ENCODE measurements at regions of chr4 and their contacts with region 1.

Region 1: GRCh38 chr4:84966383-84967242 is at the start of gene WDFY3:
- DNase-seq: peak; percentile 89 to 94
- ATAC-seq: peak; percentile 95
- H3K4me3 ChIP-seq: peak within 1 kb of the TSS; percentile 78 to 93
- H3K27ac ChIP-seq: peak within 1 kb of the TSS; percentile 80 to 87
- H3K4me1 ChIP-seq: peaks cover 2 to 3% of the 10 kb centered on the region in 2 donors
- H3K27me3 ChIP-seq: no peaks in the 10 kb centered on the region
- total RNA-seq, gene WDFY3: 127 to 177 TPM

Region 2: DNA sequence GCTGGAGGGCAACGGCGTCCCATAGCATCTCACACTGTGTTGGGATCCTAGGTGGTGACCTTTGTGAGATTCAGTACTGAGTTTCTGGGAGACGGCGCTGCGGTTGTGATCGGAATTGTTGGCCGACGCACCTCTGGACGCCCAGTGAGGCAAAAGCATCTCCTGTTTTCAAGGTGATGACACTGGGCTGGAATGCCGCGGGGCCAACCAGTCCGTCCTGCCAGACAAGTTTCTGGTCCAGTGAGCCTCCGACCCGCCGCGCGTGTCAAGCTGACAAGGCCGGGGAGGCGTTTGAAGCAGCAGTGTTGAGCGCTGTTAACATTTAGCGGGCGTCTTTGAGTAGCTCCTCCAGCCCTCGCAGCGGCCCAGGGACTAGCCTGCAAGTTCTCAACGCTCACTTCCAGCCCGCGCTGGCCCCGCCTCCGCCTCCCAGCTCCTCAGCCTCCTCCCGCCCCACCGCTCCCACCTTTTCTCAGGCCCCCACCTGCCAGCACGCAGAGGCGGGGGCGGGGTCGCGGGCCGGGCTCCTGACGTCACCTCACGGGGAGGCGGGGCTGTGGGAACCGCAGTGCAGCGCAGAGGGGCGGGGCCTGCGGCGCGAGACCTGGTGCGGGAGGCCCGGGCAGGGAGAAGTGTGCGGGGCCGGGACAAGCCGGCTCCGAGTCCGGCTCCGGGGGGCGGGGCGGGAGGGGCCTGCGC is 384.2 kb before region 1 on chr4:
- intact Hi-C with region 1: loop called in 1 of 2 experiments (anchors 5 kb)
- DNase-seq: peak; percentile 85 to 93
- ATAC-seq: peak; percentile 85
- H3K4me3 ChIP-seq: peak overlapping the region; percentile 62 to 71
- H3K27ac ChIP-seq: no peak overlapping the region
- H3K4me1 ChIP-seq: no peaks in the 10 kb centered on the region
- H3K27me3 ChIP-seq: no peaks in the 10 kb centered on the region

Region 3: DNA sequence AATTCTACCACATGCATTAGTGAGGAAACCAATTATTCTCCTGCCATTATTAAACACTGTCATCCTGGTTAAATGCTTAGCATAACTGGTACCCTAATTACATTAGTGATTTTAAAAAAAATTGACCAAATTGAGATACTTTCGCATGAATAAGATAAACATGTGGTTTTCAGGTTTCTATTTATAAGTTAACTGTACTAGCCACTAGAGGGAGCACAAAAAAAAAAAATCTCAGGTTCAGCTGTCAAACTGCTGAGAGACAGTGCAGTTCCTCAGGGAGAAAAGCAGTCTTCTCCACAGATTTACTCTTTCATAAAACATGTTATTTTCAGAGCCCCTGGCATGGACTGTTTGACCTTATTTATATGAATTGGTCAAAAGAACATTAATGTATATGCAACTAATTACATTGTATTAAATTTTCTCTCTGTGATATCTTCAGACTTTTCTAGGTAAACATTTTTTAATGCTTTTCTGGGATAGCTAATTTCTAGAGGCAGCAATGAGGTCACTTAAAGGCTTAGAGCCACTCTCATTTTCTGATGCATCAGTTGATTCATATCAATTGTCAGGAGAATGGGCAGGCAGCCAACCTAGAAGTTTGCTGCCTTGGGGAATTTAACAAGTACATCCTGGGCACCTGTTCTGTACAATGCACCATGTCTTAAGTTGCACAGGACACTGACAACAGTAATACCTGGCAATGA is 216.2 kb before region 1 on chr4:
- intact Hi-C with region 1: loop called in 1 of 2 experiments (anchors 2 kb)
- DNase-seq: no peak
- ATAC-seq: no peak
- H3K4me3 ChIP-seq: no peak overlapping the region
- H3K27ac ChIP-seq: no peak overlapping the region
- H3K4me1 ChIP-seq: no peaks in the 10 kb centered on the region
- H3K27me3 ChIP-seq: no peaks in the 10 kb centered on the region

Region 4: DNA sequence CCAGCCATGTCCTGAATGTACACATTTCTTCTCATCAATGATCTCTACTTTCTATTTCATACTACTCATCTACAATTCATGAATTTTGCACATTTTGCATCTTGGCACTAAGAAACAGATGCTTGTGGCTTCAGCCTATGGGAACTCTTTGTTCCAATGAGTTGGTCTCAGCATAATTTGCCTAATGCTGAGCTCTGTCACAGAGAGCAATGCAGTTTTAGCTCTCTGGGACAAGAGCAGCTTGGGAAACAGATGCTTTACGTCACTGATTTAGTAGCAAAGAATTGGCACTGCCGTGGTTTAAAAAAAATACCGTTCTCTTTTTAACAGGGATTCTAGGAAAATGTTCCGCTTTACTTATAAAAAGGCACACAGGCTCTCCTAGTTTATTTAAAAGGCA is 162.5 kb before region 1 on chr4:
- intact Hi-C with region 1: loop called in 1 of 2 experiments (anchors 10 kb)
- DNase-seq: no peak
- ATAC-seq: no peak
- H3K4me3 ChIP-seq: no peak overlapping the region
- H3K27ac ChIP-seq: no peak overlapping the region
- H3K4me1 ChIP-seq: peaks cover 3% of the 10 kb centered on the region in 2 donors
- H3K27me3 ChIP-seq: no peaks in the 10 kb centered on the region

Region 5: DNA sequence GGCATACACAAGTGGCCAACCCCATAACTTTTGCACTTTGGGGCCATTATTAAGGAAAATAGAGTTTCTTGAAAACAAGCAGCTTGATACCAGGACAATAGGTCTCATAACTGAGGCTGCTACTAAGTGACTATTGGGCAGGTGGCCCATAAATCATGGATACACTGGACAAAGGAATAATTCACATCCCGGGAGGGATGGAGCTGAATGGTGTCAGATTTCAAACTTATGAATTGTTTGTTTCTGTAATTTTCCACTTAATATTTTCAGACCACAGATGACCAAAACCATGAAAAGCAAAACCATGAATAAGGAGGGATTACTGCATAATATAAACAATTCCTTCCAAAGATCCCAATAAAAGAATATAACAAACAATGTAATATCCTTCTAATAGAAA is 114.5 kb before region 1 on chr4:
- intact Hi-C with region 1: loop called in 1 of 2 experiments (anchors 10 kb)
- DNase-seq: no peak
- ATAC-seq: no peak
- H3K4me3 ChIP-seq: no peak overlapping the region
- H3K27ac ChIP-seq: no peak overlapping the region
- H3K4me1 ChIP-seq: peaks cover 3 to 5% of the 10 kb centered on the region in 2 donors
- H3K27me3 ChIP-seq: no peaks in the 10 kb centered on the region

Region 6: GRCh38 chr4:84907145-84907544 is 59.5 kb before region 1 on chr4:
- intact Hi-C with region 1: loop called in 1 of 2 experiments (anchors 10 kb)
- DNase-seq: no peak
- ATAC-seq: no peak
- H3K4me3 ChIP-seq: no peak overlapping the region
- H3K27ac ChIP-seq: no peak overlapping the region
- H3K4me1 ChIP-seq: peaks cover under 1 to 13% of the 10 kb centered on the region in 2 donors
- H3K27me3 ChIP-seq: no peaks in the 10 kb centered on the region

Measured in aorta (tissue), 5 donors.